ENCODE measurements at regions of chr1 and their contacts with region 1.

Region 1: DNA sequence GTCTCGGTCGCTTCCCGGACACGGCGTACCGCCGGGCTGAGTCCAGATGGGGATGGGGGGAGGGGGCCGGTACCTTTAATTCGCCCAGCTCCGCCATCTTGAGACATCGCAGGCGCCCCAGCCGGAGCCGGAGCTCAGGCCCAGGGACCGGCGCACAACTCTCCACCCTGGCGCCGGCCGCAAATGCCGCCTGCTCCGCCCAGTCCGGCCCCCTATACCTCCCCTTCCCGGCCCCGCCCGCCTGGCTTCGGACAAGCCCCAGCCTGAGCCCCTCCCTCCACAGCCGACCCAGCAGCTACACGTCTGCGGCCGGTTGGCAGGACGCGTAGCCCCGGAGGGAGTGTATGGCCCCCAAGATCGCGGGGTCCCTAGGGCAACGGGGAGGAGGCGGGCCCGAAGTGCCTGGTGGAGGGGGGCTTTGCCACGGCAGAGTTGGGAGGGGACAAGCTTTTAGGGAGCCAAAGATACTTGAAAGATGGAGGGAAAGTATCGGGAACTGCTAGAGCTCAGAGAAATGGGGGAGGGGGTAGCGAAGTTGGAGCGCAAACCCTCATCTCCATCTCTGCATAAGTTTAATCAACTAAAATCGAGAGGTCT is at the start of gene PIAS3:
- DNase-seq: peak; percentile 91
- ATAC-seq: peak; percentile 86
- H3K4me3 Mint-ChIP-seq: peak within 1 kb of the TSS; percentile 95
- H3K27ac Mint-ChIP-seq: peak within 1 kb of the TSS; percentile 87
- H3K4me1 Mint-ChIP-seq: peaks cover 21% of the 10 kb centered on the region
- H3K27me3 Mint-ChIP-seq: peaks cover 11% of the 10 kb centered on the region
- total RNA-seq, gene PIAS3: 19.8 to 23.7 TPM

Region 2: DNA sequence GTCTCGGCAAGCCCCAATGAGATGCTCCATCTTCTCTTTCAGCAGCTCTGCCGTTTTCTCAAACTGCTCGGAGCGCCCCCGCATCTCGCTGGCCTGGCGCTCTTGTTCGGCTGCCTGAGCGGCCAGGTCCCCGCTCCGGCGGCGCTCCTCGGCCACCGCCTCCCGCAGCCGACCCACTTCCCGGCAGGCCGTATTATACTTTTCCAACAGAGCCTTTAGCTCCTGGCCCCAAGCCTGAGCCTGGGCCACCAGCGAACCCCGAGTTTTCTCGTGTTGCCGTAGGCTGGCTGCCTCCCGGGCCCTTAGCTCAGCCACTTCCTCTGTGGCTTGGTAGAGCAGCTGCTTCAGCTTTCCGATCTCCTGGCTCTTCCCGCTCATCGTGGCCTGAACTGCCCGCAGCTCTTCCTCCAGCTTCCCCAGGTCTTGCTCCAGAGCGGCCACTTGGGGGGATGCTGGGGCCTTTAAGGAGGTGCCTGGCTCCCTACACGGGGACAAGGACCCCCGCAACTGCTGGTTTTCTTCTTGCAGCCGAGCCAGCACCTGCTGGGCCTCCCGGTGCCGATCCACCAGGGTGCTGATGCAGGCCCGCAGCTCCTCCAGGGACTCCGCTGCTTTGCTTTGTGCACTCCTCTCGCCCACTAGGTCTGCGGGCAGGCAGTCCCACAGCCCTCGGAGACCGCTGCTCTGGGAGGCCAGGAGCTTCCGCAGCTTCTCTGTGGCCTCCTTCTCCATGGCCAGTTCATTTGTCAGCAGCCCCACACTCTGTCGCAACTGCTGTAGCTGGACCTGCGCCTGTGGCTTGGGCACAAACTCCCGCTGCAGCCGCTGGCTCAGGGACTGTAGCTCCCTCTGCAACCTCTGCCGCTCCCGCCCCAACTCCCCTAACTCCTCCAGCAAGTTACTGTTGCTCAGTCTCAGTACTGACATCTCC is 13.3 kb after region 1 on chr1:
- CTCF ChIA-PET with region 1: interaction called, 10 read pairs
- POLR2A ChIA-PET with region 1: interaction called, 16 read pairs
- DNase-seq: peak; percentile 59
- ATAC-seq: peak; percentile 92
- H3K4me3 Mint-ChIP-seq: peak overlapping the region; percentile 67
- H3K27ac Mint-ChIP-seq: peak overlapping the region; percentile 81
- H3K4me1 Mint-ChIP-seq: peaks cover 20% of the 10 kb centered on the region
- H3K27me3 Mint-ChIP-seq: peaks cover 17% of the 10 kb centered on the region

Region 3: DNA sequence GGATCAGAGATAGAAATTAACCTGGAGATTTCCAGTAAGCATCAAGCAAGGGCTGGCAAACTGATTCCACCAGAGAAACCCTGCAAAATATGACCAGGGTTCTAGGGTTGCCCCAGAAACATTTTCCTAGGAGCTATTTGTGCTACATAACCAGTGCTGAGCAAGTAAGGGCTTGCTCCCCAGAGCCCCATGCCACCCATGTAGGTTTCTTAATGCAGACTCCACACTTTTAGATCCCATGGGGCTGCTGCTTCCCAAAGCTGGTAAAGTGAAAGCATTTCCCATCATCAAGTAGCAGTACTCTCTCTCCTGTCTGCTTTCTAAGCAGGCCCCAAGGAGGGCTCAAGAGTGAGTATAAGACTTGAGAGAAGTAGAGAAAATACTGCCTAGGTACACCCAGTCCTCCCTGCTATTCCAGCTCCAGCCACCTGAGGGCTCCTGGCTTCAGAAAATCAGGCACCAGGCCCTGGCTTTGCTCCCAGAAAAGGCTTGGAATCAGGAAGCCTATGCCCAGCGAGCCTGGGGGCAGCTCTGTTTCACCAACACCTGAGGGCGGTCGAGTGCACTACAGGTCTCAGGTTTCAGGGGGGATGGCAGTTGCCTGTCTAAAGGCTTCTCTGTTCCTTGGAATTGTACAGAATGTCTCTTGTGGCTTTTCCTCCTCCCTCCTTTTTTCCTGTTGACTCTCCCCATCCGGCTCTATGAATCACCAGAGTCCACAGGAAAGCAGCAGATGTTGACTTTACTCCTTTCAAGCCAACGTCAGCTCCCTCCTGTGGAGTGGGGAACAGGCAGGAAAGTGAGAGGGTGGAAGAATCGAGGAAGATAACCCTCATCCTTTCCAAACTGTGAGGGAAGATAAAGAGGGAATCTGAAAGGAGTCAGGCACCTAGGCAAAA is 32.8 kb after region 1 on chr1:
- CTCF ChIA-PET with region 1: interaction called, 17 read pairs
- POLR2A ChIA-PET with region 1: interaction called, 7 read pairs
- DNase-seq: peak; percentile 62
- ATAC-seq: peak; percentile 78
- H3K4me3 Mint-ChIP-seq: no peak overlapping the region
- H3K27ac Mint-ChIP-seq: peak overlapping the region; percentile 40
- H3K4me1 Mint-ChIP-seq: peaks cover 1% of the 10 kb centered on the region
- H3K27me3 Mint-ChIP-seq: no peaks in the 10 kb centered on the region

Region 4: GRCh38 chr1:145918144-145918992 is 59.4 kb after region 1 on chr1 and contains the start of gene PEX11B:
- CTCF ChIA-PET with region 1: interaction called, 12 read pairs
- POLR2A ChIA-PET with region 1: interaction called, 18 read pairs
- DNase-seq: peak; percentile 94
- ATAC-seq: peak; percentile 94
- H3K4me3 Mint-ChIP-seq: peak within 1 kb of the TSS; percentile 92
- H3K27ac Mint-ChIP-seq: peak within 1 kb of the TSS; percentile 99
- H3K4me1 Mint-ChIP-seq: peaks cover 34% of the 10 kb centered on the region
- H3K27me3 Mint-ChIP-seq: no peaks in the 10 kb centered on the region
- total RNA-seq, gene PEX11B: 33.3 to 35.9 TPM

Region 5: DNA sequence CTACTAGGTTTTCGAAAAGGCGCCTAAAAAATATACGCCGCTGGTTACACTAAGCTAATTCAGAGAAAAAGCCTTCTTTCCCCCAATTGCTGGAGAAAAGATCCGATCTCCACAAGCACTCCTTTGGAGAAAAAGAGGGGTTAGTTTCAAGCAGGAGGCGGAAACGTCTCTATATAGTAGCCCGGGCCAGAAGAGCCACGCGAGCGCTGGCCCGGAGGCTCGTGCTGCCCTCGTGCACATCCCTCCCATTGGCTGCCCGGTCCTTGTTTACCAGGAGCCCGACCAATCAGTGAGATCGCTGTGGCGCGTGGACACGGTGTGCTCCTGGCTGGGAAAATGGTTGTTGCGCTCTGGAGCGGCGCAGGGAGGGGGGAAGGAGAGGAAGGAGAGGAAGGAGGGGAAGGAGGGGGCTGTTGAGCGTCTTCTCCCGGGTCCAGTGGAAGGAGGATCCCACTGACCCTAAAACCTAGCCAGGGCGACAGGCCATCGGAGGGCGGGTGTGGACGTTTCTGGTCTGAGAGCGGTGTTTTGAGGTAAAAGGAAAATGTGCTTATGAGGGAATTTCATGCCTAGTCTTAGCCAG is 137.5 kb after region 1 on chr1 and contains the start of gene TXNIP:
- CTCF ChIA-PET with region 1: no interaction called
- POLR2A ChIA-PET with region 1: interaction called, 12 read pairs
- DNase-seq: peak; percentile 97
- ATAC-seq: peak; percentile 94
- H3K4me3 Mint-ChIP-seq: peak within 1 kb of the TSS; percentile 87
- H3K27ac Mint-ChIP-seq: peak within 1 kb of the TSS; percentile 95
- H3K4me1 Mint-ChIP-seq: peaks cover 59% of the 10 kb centered on the region
- H3K27me3 Mint-ChIP-seq: no peaks in the 10 kb centered on the region
- total RNA-seq, gene TXNIP: 190 to 195 TPM

Measured in activated CD8-positive, alpha-beta T cell treated with anti-CD3 and anti-CD28 coated beads, Interleukin-2, amount 10 ng/mL, durations not matched to agents 7 days and 5 days (primary cell).